ENCODE measurements at regions of chr6 and their contacts with region 1.

Region 1: GRCh38 chr6:45421709-45422502 is 44.2 kb upstream of the SUPT3H start:
- DNase-seq: peak in 7 of 9 donors; percentile 41 to 69 (median 44)
- ATAC-seq: peak; percentile 52
- H3K4me3 ChIP-seq: peak overlapping the region; percentile 80
- H3K4me3 Mint-ChIP-seq: peak overlapping the region; percentile 89 to 99 (median 94)
- H3K27ac ChIP-seq: peak overlapping the region; percentile 53
- H3K27ac Mint-ChIP-seq: peak overlapping the region; percentile 54 to 95 (median 81)
- H3K4me1 ChIP-seq: peaks cover 17 to 24% of the 10 kb centered on the region in 2 donors
- H3K4me1 Mint-ChIP-seq: peaks cover 13 to 52% (median 43%) of the 10 kb centered on the region in 7 donors
- H3K27me3 ChIP-seq: peaks cover 8% of the 10 kb centered on the region in 2 donors
- H3K27me3 Mint-ChIP-seq: peaks cover 0 to 48% (median 26%) of the 10 kb centered on the region in 5 donors

Region 2: GRCh38 chr6:44655412-44656342 is 766.2 kb before region 1 on chr6:
- CTCF ChIA-PET with region 1: interaction called, 27 read pairs
- POLR2A ChIA-PET with region 1: interaction called, 7 read pairs
- intact Hi-C with region 1: loop called (anchors 1 kb)
- DNase-seq: peak; percentile 33 to 79 (median 65)
- ATAC-seq: peak; percentile 84
- H3K4me3 ChIP-seq: no peak overlapping the region
- H3K4me3 Mint-ChIP-seq: peak overlapping the region in 8 of 10 donors; percentile 26 to 72 (median 64)
- H3K27ac ChIP-seq: no peak overlapping the region
- H3K27ac Mint-ChIP-seq: peak overlapping the region; percentile 37 to 96 (median 79)
- H3K4me1 ChIP-seq: peaks cover 0 to 9% of the 10 kb centered on the region in 2 donors
- H3K4me1 Mint-ChIP-seq: peaks cover 6 to 16% (median 10%) of the 10 kb centered on the region in 7 donors
- H3K27me3 ChIP-seq: no peaks in the 10 kb centered on the region
- H3K27me3 Mint-ChIP-seq: peaks cover 0 to 12% (median 2%) of the 10 kb centered on the region in 5 donors

Region 3: GRCh38 chr6:44976719-44977641 is 444.9 kb before region 1 on chr6:
- CTCF ChIA-PET with region 1: interaction called, 3 read pairs
- POLR2A ChIA-PET with region 1: interaction called, 3 read pairs
- intact Hi-C with region 1: loop called in 1 of 2 experiments (anchors 1 kb)
- DNase-seq: peak in 7 of 9 donors; percentile 57 to 84 (median 73)
- ATAC-seq: peak; percentile 93
- H3K4me3 ChIP-seq: no peak overlapping the region
- H3K4me3 Mint-ChIP-seq: peak overlapping the region; percentile 23 to 74 (median 58)
- H3K27ac ChIP-seq: peak overlapping the region; percentile 18
- H3K27ac Mint-ChIP-seq: peak overlapping the region; percentile 20 to 88 (median 80)
- H3K4me1 ChIP-seq: peaks cover 6 to 23% of the 10 kb centered on the region in 2 donors
- H3K4me1 Mint-ChIP-seq: peaks cover 8 to 76% (median 47%) of the 10 kb centered on the region in 7 donors
- H3K27me3 ChIP-seq: no peaks in the 10 kb centered on the region
- H3K27me3 Mint-ChIP-seq: no peaks in the 10 kb centered on the region

Region 4: DNA sequence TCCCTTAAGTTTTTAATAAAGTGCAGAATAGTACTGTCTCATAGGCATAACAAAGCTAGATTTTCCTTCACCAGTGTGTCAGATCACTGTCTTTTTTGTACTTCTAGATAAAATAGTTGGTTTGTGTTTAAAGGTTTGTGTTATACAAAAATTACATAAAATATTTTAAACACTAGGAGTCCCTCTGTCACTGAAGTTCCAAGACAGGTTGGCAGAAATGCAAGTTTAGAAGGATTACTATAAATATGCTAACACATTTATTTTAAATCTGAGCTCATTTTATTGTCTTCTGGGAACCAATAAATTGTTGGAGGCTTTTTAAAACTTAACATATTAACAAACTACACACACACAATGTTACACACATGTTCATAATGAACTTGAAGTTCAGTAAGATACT is 124.6 kb before region 1 on chr6:
- CTCF ChIA-PET with region 1: interaction called, 3 read pairs
- POLR2A ChIA-PET with region 1: interaction called, 4 read pairs
- intact Hi-C with region 1: loop called in 1 of 2 experiments (anchors 1 kb)
- DNase-seq: no peak
- ATAC-seq: no peak
- H3K4me3 ChIP-seq: no peak overlapping the region
- H3K4me3 Mint-ChIP-seq: no peak overlapping the region
- H3K27ac ChIP-seq: no peak overlapping the region
- H3K27ac Mint-ChIP-seq: peak overlapping the region in 6 of 9 donors; percentile 4 to 56 (median 19)
- H3K4me1 ChIP-seq: peaks cover 0 to 14% of the 10 kb centered on the region in 2 donors
- H3K4me1 Mint-ChIP-seq: peaks cover 21 to 74% (median 43%) of the 10 kb centered on the region in 7 donors
- H3K27me3 ChIP-seq: no peaks in the 10 kb centered on the region
- H3K27me3 Mint-ChIP-seq: no peaks in the 10 kb centered on the region

Region 5: DNA sequence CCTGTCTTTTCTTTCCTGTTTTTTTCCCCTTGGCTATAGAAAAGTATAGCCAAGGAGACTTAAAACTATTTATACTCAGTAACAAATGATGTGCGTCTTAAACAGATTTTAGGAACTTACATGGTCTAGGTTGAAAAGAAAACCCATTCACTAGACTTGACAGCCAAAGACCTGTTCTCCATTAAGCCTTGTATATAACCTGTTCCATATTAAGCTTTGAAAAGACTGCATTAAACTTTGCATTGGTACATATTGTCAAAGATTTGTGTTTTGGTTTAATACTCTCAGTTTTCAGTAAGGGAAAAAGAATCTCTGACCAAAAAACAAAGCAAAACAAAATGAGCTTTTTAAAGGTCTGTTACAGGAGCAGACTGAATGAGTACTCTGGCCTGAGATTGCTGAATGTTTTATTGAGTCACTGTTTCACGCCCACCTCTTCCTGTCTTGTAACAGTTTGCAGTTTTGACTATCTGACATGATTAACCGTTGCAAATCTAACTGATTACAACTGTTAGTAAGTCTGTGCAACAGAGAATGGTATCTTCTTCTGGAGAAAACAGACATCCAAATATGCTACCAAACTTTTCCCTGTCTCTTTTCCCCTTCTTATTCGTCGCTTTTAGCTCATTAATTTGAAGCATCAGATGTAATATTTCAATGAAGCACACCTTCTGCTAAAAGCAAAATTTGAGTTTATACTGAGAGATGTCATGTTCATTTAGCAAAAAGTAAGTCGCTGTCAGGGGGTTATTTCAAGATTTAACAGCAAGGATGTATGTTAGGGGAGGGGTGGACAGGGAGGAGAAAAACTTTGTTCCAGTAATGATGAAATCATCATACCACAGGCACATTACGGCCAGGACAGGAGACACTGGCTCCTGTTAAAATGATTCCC is 14.9 kb after region 1 on chr6:
- CTCF ChIA-PET with region 1: no interaction called
- POLR2A ChIA-PET with region 1: interaction called, 6 read pairs
- intact Hi-C with region 1: loop called (anchors 1 kb)
- DNase-seq: peak in 1 of 9 donors; percentile 31
- ATAC-seq: peak; percentile 85
- H3K4me3 ChIP-seq: no peak overlapping the region
- H3K4me3 Mint-ChIP-seq: peak overlapping the region in 4 of 10 donors; percentile 2 to 75 (median 48)
- H3K27ac ChIP-seq: no peak overlapping the region
- H3K27ac Mint-ChIP-seq: peak overlapping the region in 2 of 9 donors; percentile 38 to 86
- H3K4me1 ChIP-seq: peaks cover 18 to 32% of the 10 kb centered on the region in 2 donors
- H3K4me1 Mint-ChIP-seq: peaks cover 36 to 71% (median 56%) of the 10 kb centered on the region in 7 donors
- H3K27me3 ChIP-seq: no peaks in the 10 kb centered on the region
- H3K27me3 Mint-ChIP-seq: peaks cover 0 to 7% (median 0%) of the 10 kb centered on the region in 5 donors

Region 6: DNA sequence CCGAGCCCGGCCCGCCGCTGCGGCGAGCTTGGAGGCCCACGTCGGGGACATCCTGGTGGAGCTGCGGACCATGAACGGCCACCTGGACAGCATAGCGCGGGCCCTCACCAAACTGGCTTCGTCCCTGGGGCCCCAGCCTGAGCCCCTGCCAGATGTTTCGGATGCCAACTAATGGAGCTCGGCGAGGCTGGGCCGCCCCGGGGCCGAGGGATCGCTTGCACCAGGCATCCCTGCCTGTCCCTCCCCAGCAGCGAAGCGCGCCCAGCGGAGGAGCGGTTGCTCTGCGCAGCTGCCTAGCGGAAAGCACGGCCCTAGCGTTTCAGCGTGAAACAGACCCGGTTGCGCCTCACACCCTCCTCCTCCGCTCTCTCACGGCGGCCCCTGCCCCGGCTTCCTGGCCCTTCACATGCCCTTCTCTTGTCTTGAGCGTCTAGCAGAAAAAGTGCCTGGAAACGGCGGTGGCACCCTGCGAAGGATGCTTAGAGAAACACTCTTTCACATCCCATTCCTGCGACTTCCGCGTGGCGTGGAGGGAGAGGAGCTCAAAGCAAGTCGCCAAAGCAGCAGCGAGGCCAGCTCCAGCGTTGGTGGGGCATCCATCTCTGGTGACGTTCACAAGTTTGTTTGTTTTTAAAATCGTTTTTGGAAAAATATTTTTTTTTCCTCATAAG is 241.8 kb after region 1 on chr6:
- CTCF ChIA-PET with region 1: no interaction called
- POLR2A ChIA-PET with region 1: no interaction called
- intact Hi-C with region 1: loop called in 1 of 2 experiments (anchors 5 kb)
- DNase-seq: peak in 8 of 9 donors; percentile 14 to 55 (median 47)
- ATAC-seq: peak; percentile 72
- H3K4me3 ChIP-seq: peak overlapping the region; percentile 46
- H3K4me3 Mint-ChIP-seq: peak overlapping the region; percentile 34 to 84 (median 71)
- H3K27ac ChIP-seq: no peak overlapping the region
- H3K27ac Mint-ChIP-seq: peak overlapping the region in 1 of 9 donors; percentile 32
- H3K4me1 ChIP-seq: peaks cover 0 to 12% of the 10 kb centered on the region in 2 donors
- H3K4me1 Mint-ChIP-seq: peaks cover 7 to 57% (median 43%) of the 10 kb centered on the region in 7 donors
- H3K27me3 ChIP-seq: no peaks in the 10 kb centered on the region
- H3K27me3 Mint-ChIP-seq: peaks cover 0 to 31% (median 17%) of the 10 kb centered on the region in 5 donors

Region 7: GRCh38 chr6:45812922-45813321 is 391.0 kb after region 1 on chr6:
- CTCF ChIA-PET with region 1: no interaction called
- POLR2A ChIA-PET with region 1: no interaction called
- intact Hi-C with region 1: no loop called
- DNase-seq: no peak
- ATAC-seq: no peak
- H3K4me3 ChIP-seq: no peak overlapping the region
- H3K4me3 Mint-ChIP-seq: no peak overlapping the region
- H3K27ac ChIP-seq: no peak overlapping the region
- H3K27ac Mint-ChIP-seq: no peak overlapping the region
- H3K4me1 ChIP-seq: no peaks in the 10 kb centered on the region
- H3K4me1 Mint-ChIP-seq: peaks cover 0 to 6% (median 0%) of the 10 kb centered on the region in 7 donors
- H3K27me3 ChIP-seq: no peaks in the 10 kb centered on the region
- H3K27me3 Mint-ChIP-seq: peaks cover 0 to 16% (median 13%) of the 10 kb centered on the region in 5 donors

Region 8: GRCh38 chr6:45854149-45854742 is 432.3 kb after region 1 on chr6:
- CTCF ChIA-PET with region 1: no interaction called
- POLR2A ChIA-PET with region 1: no interaction called
- intact Hi-C with region 1: no loop called
- DNase-seq: no peak
- ATAC-seq: no peak
- H3K4me3 ChIP-seq: no peak overlapping the region
- H3K4me3 Mint-ChIP-seq: no peak overlapping the region
- H3K27ac ChIP-seq: no peak overlapping the region
- H3K27ac Mint-ChIP-seq: no peak overlapping the region
- H3K4me1 ChIP-seq: no peaks in the 10 kb centered on the region
- H3K4me1 Mint-ChIP-seq: no peaks in the 10 kb centered on the region
- H3K27me3 ChIP-seq: no peaks in the 10 kb centered on the region
- H3K27me3 Mint-ChIP-seq: peaks cover 2 to 23% (median 16%) of the 10 kb centered on the region in 5 donors

Region 9: DNA sequence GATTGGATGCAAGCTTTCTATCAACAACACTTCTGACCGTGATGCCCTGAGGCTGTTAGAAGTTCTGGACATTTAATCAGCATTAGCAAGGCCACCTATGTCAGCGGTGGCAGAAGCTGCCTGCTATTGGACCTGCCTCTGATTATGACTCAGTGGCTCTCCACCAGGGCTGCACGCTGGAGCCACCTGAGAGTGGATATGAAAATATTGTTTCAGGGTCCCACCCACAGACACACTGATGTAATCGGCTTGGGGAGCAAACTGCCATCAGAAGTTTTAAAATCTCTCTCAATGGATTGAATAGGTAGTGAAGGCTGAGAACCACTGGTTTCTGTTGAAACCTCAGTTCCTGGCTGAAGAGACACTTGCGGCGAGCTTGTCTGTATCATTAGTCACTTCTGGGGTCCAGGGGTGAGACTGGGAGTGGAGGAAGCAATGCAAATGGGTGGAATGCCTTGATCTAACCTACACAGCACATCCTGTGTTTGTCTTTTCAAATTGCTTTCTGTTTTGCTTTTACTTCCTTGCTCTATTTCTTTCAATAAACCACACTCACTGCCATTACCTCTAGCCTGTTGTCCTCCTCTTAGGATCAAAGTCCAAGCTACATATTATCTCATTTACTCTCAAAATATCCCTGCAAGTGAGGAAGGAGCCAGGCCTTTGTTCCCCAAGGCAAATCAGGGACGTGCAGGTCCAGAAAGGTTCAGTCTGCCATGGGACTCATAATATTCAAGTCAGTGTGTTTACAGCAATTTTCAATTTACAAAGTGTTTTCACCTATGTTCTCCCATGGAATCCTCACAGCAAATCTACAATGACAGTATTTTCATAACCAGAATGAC is 589.6 kb after region 1 on chr6:
- CTCF ChIA-PET with region 1: no interaction called
- POLR2A ChIA-PET with region 1: no interaction called
- intact Hi-C with region 1: loop called (anchors 2 to 10 kb)
- DNase-seq: peak in 8 of 9 donors; percentile 35 to 69 (median 58)
- ATAC-seq: peak; percentile 88
- H3K4me3 ChIP-seq: peak overlapping the region; percentile 45
- H3K4me3 Mint-ChIP-seq: peak overlapping the region; percentile 68 to 82 (median 78)
- H3K27ac ChIP-seq: peak overlapping the region; percentile 64
- H3K27ac Mint-ChIP-seq: peak overlapping the region; percentile 85 to 98 (median 92)
- H3K4me1 ChIP-seq: peaks cover 37 to 43% of the 10 kb centered on the region in 2 donors
- H3K4me1 Mint-ChIP-seq: peaks cover 37 to 62% (median 60%) of the 10 kb centered on the region in 7 donors
- H3K27me3 ChIP-seq: no peaks in the 10 kb centered on the region
- H3K27me3 Mint-ChIP-seq: peaks cover 0 to 14% (median 1%) of the 10 kb centered on the region in 5 donors

Region 10: DNA sequence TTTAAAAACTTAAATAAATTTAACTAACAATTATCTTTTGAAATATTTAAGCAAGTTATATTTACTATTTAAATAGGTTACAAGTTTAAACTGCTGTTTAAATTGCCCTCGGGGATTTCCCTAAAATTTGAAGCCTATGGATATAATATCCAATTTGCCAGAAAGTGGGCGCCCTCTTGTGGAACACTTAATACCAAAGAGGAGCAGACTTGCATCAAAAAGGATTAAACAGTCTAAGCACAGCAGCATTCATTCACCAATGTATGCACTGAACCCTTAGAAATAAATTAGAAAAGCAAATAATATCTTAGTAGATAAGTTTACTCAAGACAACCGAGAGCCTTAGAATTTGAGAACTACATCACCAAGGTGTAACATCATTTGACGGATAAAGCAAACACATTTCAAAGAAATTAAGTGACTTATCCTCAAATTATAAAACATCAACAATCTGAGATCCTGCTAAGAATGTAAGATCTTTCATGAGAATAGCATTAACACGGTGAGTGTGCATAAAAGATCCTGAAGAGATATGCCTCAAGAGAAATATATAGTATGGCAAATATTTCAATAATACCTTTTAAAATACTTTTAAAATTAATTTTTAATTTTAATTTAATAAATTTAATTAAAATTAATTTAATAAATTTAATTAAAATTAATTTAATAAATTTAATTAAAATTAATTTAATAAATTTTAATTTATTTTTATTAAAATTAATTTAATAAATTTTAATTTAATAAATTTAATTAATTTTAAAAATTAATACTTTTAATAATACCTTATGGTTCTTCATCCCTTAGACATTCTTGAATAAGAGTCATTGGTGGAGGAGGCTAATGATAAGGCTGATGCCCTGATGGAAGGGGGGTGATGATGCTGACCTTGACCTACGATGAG is 1359.8 kb after region 1 on chr6:
- CTCF ChIA-PET with region 1: no interaction called
- POLR2A ChIA-PET with region 1: no interaction called
- intact Hi-C with region 1: no loop called
- DNase-seq: no peak
- ATAC-seq: peak; percentile 53
- H3K4me3 ChIP-seq: no peak overlapping the region
- H3K4me3 Mint-ChIP-seq: no peak overlapping the region
- H3K27ac ChIP-seq: no peak overlapping the region
- H3K27ac Mint-ChIP-seq: no peak overlapping the region
- H3K4me1 ChIP-seq: no peaks in the 10 kb centered on the region
- H3K4me1 Mint-ChIP-seq: no peaks in the 10 kb centered on the region
- H3K27me3 ChIP-seq: no peaks in the 10 kb centered on the region
- H3K27me3 Mint-ChIP-seq: peaks cover 0 to 32% (median 9%) of the 10 kb centered on the region in 5 donors

Measured in naive thymus-derived CD4-positive, alpha-beta T cell (primary cell).